HEK293 (cell line): ENCODE measurements at regions of chr17 and their contacts with region 1.

Region 1: DNA sequence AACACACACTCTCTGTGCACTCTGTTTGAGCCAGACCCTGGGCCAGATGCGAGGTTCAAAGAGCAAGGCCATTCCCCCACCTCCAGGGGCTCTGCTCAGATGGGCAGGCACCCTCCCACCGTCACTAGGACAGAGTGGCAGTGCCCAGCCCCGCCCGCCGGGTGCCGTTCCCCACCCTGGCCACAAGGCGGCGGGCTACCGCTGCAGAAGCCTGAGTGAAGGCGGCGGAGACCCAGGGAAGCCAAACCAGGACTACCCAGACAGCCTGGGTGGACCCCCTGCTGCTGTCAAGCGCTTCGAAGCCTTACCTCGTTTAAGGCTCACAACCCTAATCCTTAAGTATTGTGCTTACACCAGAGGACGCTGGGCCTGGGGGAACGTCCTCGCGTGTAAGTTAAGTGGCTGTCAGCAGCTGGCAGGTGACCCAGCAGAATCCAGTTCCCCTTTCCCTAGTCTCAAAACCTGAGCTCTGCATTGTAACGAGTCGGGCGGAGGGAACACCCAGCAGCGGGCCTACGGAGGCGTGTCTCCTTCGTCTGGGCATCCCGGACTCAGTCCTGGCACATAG is 4.5 kb downstream of the ARHGAP27 start:
- H3K4me3 ChIP-seq: no peak overlapping the region
- H3K27ac ChIP-seq: no peak overlapping the region
- H3K4me1 ChIP-seq: peaks cover 15% of the 10 kb centered on the region
- CTCF ChIP-seq: peak; percentile 91

Region 2: DNA sequence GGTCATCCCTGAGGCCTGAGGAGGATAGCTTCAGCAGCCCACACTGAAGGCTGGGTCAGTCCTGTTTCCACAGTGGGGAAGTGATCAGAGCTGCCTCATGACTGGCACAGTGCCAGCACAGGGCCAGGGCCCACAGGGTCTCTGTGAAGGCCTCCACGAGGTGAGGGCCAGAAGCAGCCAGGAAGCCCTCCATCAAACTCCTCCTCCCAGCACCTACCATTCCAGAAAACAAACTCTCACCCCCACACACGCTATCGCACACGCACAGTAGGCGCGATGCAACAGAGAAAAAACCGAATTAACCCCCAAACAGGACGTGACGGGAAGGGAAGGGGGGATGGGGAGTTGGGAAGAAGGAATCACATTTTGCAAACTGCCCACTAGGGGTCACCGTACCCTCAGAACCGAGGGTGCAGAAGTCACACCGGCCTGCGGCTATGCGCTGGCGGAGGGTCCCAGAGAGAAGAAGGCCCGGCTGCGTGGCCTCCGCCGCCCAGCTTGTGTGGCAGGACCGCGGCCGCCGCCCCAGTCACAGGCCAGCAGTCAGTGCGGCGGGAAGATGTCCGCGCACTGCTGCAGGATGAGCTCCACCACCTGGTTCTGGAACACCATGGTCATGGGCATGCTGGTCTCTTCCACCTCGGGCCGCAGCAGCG is 33.1 kb before region 1 on chr17:
- CTCF ChIA-PET with region 1: interaction called, 201 read pairs
- POLR2A ChIA-PET with region 1: interaction called, 4 read pairs
- H3K4me3 ChIP-seq: no peak overlapping the region
- H3K27ac ChIP-seq: no peak overlapping the region
- H3K4me1 ChIP-seq: no peaks in the 10 kb centered on the region
- CTCF ChIP-seq: peak; percentile 74

Region 3: DNA sequence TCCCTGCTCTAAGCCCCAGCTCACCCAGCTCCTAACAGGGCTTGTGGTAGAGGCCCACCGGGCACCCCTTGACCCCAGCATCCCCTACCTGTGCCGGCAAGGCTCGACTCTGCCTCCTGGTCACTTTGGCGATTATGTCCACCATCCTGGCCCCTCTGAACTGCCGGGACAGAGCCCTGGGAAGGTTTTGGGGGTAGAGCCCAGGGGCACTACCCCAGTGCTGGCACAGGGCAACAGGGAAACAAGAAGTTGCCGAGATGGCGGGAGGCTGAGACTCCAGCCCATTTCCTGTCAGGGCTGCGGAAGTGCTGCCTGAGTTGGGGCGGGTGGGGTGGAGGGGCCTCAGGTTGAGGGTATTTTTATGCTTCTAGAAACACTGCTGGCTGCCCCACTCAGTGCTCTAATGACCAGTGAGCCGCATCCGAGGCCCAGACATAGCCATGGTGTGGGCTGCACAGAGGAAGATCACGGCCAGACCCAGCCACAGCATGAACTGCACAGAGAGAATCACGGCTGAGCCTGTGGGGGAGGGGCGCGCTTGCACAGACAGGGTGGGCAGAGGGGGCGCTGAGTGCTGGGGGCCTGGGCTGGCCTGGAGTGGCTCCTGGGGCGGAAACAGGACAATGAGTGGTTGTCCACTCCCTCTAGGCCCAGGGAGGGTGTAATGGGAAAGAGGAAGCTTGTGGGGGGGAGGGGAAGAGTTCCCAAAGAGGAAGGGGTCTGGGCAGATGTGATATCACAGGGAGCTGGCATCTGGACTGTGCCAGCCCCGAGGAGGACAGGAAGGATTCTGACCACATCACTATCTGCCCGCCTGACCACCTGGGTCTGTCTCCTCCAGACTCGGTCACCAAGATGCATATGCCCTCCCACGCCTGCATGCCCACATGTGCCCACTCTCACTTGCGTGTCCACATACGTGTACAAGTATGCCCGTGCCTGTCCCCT is 17.7 kb before region 1 on chr17:
- CTCF ChIA-PET with region 1: interaction called, 15 read pairs
- POLR2A ChIA-PET with region 1: interaction called, 10 read pairs
- H3K4me3 ChIP-seq: no peak overlapping the region
- H3K27ac ChIP-seq: no peak overlapping the region
- H3K4me1 ChIP-seq: no peaks in the 10 kb centered on the region
- CTCF ChIP-seq: no peak

Region 4: GRCh38 chr17:45451141-45451540 is 23.0 kb after region 1 on chr17:
- CTCF ChIA-PET with region 1: no interaction called
- POLR2A ChIA-PET with region 1: no interaction called
- H3K4me3 ChIP-seq: no peak overlapping the region
- H3K27ac ChIP-seq: no peak overlapping the region
- H3K4me1 ChIP-seq: no peaks in the 10 kb centered on the region
- CTCF ChIP-seq: no peak